ENCODE measurements at regions of chr10 and their contacts with region 1.

Region 1: GRCh38 chr10:133143200-133143533 is 16.9 kb upstream of the KNDC1 start:
- DNase-seq: no peak
- H3K4me3 ChIP-seq: no peak overlapping the region
- H3K27ac ChIP-seq: no peak overlapping the region
- H3K4me1 ChIP-seq: peaks cover 0 to 3% of the 10 kb centered on the region in 2 experiments; a peak in 1 of 4 replicates
- H3K27me3 ChIP-seq: no peaks in the 10 kb centered on the region
- CTCF ChIP-seq: no peak
- EP300 ChIP-seq: no peak
- RAD21 ChIP-seq: no peak

Region 2: DNA sequence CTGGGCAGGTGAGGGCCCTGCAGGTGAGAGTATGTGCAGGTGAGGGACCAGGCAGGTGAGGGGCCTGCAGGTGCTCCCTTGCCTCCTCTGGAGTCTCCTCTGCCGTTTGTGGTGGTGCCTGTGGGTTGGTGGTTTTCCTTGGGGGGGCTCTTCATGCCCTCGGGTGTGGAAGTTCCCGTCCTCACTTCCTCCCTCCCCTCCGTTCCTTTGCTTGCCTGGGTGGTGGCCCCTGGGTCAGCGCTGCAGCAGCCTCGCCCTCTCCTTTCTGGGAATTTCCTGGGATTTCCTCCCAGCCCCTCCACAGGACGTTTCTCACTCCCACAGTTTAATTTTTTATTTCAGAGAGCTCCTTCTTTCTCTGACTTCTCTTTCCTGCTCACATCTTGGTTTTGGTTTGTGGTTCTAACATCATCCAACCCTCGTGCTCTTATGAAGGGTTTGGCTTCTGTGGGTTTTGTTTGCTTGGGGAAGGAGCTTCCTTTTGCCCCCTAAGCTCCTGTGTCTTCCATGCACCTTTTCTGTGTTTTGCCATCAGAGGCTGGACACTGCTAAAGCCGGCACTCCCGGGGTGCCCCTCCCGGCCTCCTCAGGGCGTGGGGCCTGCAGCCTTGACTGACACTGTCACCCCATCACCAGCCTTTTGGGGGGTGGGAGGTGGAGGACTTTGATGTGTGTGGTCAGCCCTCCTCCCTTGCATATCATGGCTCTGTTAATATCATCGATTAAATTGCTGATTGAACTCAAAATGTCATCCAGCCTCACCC is 84.7 kb before region 1 on chr10:
- CTCF ChIA-PET with region 1: no interaction called
- POLR2A ChIA-PET with region 1: no interaction called
- DNase-seq: no peak
- H3K4me3 ChIP-seq: no peak overlapping the region
- H3K27ac ChIP-seq: no peak overlapping the region
- H3K4me1 ChIP-seq: no peaks in the 10 kb centered on the region
- H3K27me3 ChIP-seq: no peaks in the 10 kb centered on the region
- CTCF ChIP-seq: no peak
- EP300 ChIP-seq: no peak
- RAD21 ChIP-seq: no peak

Region 3: GRCh38 chr10:133159950-133160819 is 17.0 kb after region 1 on chr10 and contains the start of gene KNDC1:
- CTCF ChIA-PET with region 1: interaction called, 13 read pairs
- POLR2A ChIA-PET with region 1: interaction called, 4 read pairs
- DNase-seq: peak; percentile 93
- H3K4me3 ChIP-seq: peak within 1 kb of the TSS; percentile 56 to 67
- H3K27ac ChIP-seq: no peak within 1 kb of the TSS; a peak in 1 of 4 replicates
- H3K4me1 ChIP-seq: peaks cover 0 to 22% of the 10 kb centered on the region in 2 experiments; a peak in 1 of 4 replicates
- H3K27me3 ChIP-seq: 0 out of 2 replicates have a peak, but pooled peaks cover 5% of the 10 kb centered on the region
- CTCF ChIP-seq: no peak
- EP300 ChIP-seq: no peak
- RAD21 ChIP-seq: no peak
- polyA plus RNA-seq, gene KNDC1: 1.4 TPM in 2 replicates